Common myeloid progenitor, CD34-positive (primary cell): ENCODE measurements at regions of chr2 and their contacts with region 1.

Region 1: GRCh38 chr2:98505311-98505808 is 60.7 kb downstream of the INPP4A start:
- DNase-seq: peak; percentile 52 to 91 (median 88)
- H3K4me3 ChIP-seq: peak overlapping the region in 2 of 7 experiments; percentile 29 to 30
- H3K27ac ChIP-seq: peak overlapping the region in 1 of 2 experiments; percentile 57
- H3K4me1 ChIP-seq: peaks cover 14 to 60% (median 40%) of the 10 kb centered on the region in 4 experiments
- H3K27me3 ChIP-seq: no peaks in the 10 kb centered on the region

Region 2: GRCh38 chr2:98346311-98347236 is 158.8 kb before region 1 on chr2 and contains the start of gene CNGA3:
- CTCF ChIA-PET with region 1: no interaction called
- POLR2A ChIA-PET with region 1: no interaction called
- DNase-seq: peak; percentile 14 to 68 (median 61)
- H3K4me3 ChIP-seq: peak within 1 kb of the TSS in 2 of 7 experiments; percentile 34 to 50
- H3K27ac ChIP-seq: no peak within 1 kb of the TSS
- H3K4me1 ChIP-seq: peaks cover 0 to 16% (median 7%) of the 10 kb centered on the region in 4 experiments
- H3K27me3 ChIP-seq: peaks cover 20 to 82% (median 41%) of the 10 kb centered on the region in 5 experiments

Region 3: GRCh38 chr2:98487806-98488651 is 17.3 kb before region 1 on chr2:
- CTCF ChIA-PET with region 1: interaction called, 19 read pairs
- POLR2A ChIA-PET with region 1: no interaction called
- DNase-seq: peak in 2 of 3 donors; percentile 65 to 66
- H3K4me3 ChIP-seq: no peak overlapping the region
- H3K27ac ChIP-seq: no peak overlapping the region
- H3K4me1 ChIP-seq: peaks cover 0 to 49% (median 8%) of the 10 kb centered on the region in 4 experiments
- H3K27me3 ChIP-seq: no peaks in the 10 kb centered on the region